Caco-2 (cell line): ENCODE measurements at regions of chr11 and their contacts with region 1.

Region 1: GRCh38 chr11:110092515-110093404 is at the start of gene ZC3H12C:
- DNase-seq: peak; percentile 97
- H3K4me3 ChIP-seq: peak within 1 kb of the TSS; percentile 79
- H3K4me3 Mint-ChIP-seq: peak within 1 kb of the TSS; percentile 95
- H3K27ac Mint-ChIP-seq: peak within 1 kb of the TSS; percentile 94
- H3K4me1 ChIP-seq: peaks cover 17% of the 10 kb centered on the region
- H3K4me1 Mint-ChIP-seq: peaks cover 6% of the 10 kb centered on the region
- H3K27me3 ChIP-seq: 0 out of 2 replicates have a peak, but pooled peaks cover 1% of the 10 kb centered on the region
- H3K27me3 Mint-ChIP-seq: no peaks in the 10 kb centered on the region
- CTCF ChIP-seq: peak in 1 of 2 experiments; percentile 73
- total RNA-seq, gene ZC3H12C: 11.4 and 11.7 TPM in 2 replicates

Region 2: DNA sequence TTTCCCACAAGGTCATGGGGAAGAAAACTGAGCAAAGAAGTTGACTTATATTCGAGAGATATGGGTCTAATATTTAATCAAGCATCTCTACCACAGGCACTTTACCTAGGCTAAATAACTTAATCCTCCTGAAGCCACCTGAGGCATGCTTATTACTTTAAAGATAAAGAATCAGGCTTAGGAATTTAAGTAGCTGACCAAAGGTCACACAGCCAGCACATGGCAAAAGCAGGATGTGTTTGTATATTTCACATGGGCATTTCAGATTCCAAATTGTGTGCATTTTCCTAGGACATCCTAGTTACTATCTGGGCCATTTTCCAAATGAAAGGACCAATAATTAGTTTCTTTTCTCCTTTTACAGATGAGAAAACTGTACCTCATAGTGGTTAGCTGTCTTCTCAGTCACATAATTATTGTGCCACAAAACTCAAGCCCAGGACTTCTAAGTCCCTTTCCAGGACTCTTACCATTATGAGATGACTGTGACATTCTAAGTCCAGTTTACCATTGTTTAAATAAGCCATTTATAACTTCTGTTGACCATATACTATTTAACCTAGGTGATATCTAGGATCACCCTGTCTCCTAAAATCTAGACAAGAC is 111.6 kb before region 1 on chr11:
- CTCF ChIA-PET with region 1: no interaction called
- POLR2A ChIA-PET with region 1: no interaction called
- intact Hi-C with region 1: loop called (anchors 1 kb)
- DNase-seq: peak; percentile 62 to 66
- H3K4me3 ChIP-seq: no peak overlapping the region
- H3K4me3 Mint-ChIP-seq: peak overlapping the region; percentile 0
- H3K27ac Mint-ChIP-seq: peak overlapping the region; percentile 30
- H3K4me1 ChIP-seq: peaks cover 32% of the 10 kb centered on the region
- H3K4me1 Mint-ChIP-seq: peaks cover 20% of the 10 kb centered on the region
- H3K27me3 ChIP-seq: no peaks in the 10 kb centered on the region
- H3K27me3 Mint-ChIP-seq: no peaks in the 10 kb centered on the region
- CTCF ChIP-seq: no peak

Region 3: GRCh38 chr11:110022548-110022947 is 70.2 kb before region 1 on chr11:
- CTCF ChIA-PET with region 1: no interaction called
- POLR2A ChIA-PET with region 1: no interaction called
- intact Hi-C with region 1: loop called (anchors 5 kb)
- DNase-seq: no peak
- H3K4me3 ChIP-seq: no peak overlapping the region
- H3K4me3 Mint-ChIP-seq: no peak overlapping the region
- H3K27ac Mint-ChIP-seq: no peak overlapping the region
- H3K4me1 ChIP-seq: peaks cover 14% of the 10 kb centered on the region
- H3K4me1 Mint-ChIP-seq: no peaks in the 10 kb centered on the region
- H3K27me3 ChIP-seq: no peaks in the 10 kb centered on the region
- H3K27me3 Mint-ChIP-seq: peaks cover 16% of the 10 kb centered on the region
- CTCF ChIP-seq: no peak

Region 4: DNA sequence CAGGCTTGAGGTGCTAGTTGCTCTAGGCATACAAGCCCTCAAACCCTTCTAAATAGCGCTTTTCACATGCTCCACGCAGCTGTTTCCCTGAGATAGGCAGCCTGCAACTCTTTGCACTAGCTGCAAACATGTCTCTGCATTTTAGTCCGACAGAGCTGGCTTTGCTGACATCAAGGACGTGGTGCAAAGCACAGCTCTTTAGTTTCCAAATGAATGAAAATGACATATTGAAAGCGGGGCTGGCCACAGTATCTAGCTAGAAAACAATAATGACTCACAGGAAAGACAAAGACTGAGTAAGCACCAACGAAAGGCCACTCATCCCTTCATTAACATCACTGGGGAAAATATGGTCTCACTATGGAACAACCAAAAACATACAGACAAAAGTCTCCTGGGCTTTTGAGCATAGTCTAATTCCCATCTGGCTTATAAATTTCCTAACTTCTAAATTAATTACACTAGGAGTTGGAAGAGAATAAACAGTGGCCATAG is 14.9 kb before region 1 on chr11:
- CTCF ChIA-PET with region 1: interaction called, 3 read pairs
- POLR2A ChIA-PET with region 1: interaction called, 12 read pairs
- intact Hi-C with region 1: loop called (anchors 1 kb)
- DNase-seq: no peak
- H3K4me3 ChIP-seq: no peak overlapping the region
- H3K4me3 Mint-ChIP-seq: no peak overlapping the region
- H3K27ac Mint-ChIP-seq: no peak overlapping the region
- H3K4me1 ChIP-seq: peaks cover 33% of the 10 kb centered on the region
- H3K4me1 Mint-ChIP-seq: peaks cover 19% of the 10 kb centered on the region
- H3K27me3 ChIP-seq: no peaks in the 10 kb centered on the region
- H3K27me3 Mint-ChIP-seq: no peaks in the 10 kb centered on the region
- CTCF ChIP-seq: no peak

Region 5: GRCh38 chr11:110173811-110174644 is 81.3 kb after region 1 on chr11:
- CTCF ChIA-PET with region 1: no interaction called
- POLR2A ChIA-PET with region 1: no interaction called
- intact Hi-C with region 1: loop called (anchors 5 kb)
- DNase-seq: peak; percentile 70
- H3K4me3 ChIP-seq: no peak overlapping the region
- H3K4me3 Mint-ChIP-seq: no peak overlapping the region
- H3K27ac Mint-ChIP-seq: no peak overlapping the region
- H3K4me1 ChIP-seq: no peaks in the 10 kb centered on the region
- H3K4me1 Mint-ChIP-seq: no peaks in the 10 kb centered on the region
- H3K27me3 ChIP-seq: no peaks in the 10 kb centered on the region
- H3K27me3 Mint-ChIP-seq: no peaks in the 10 kb centered on the region
- CTCF ChIP-seq: peak; percentile 79